H1 (cell line): ENCODE measurements at regions of chr20 and their contacts with region 1.

Region 1: DNA sequence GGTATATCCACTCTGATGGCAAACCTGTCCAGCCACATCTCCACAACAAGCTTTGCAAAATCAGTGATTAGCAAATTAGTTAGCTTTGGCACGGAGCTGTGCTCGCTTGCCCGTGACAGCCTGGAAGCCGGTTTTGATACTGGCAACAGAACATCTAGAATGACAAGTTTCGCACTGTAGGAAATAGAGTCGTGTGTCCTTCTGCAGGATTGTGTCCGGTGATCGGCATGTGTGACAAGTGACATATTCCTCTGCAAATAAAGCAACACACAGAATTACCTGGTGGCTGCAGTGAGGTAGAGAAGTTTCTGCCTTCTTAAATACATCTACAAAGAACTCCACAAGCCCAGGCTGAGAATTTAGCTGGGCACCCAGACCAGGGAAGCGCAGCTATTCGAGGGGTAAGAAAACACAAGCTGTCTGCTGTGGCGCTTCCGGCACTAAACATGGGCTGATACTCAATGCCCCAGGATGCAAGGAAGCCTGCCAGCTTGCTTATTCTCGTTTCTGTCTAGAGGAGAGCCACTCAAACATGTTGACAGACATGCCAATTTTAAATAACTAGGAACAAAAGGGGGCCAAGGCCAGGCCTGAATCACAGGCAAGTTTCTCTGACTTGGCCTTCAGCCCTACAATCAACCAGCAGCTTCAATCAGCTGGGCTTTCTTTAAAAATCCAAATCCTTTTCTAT is 22.2 kb downstream of the EIF2S2 start:
- DNase-seq: no peak
- H3K4me3 ChIP-seq: no peak overlapping the region
- H3K27ac ChIP-seq: no peak overlapping the region
- H3K4me1 ChIP-seq: no peaks in the 10 kb centered on the region
- H3K27me3 ChIP-seq: no peaks in the 10 kb centered on the region
- CTCF ChIP-seq: no peak
- EP300 ChIP-seq: no peak
- POLR2A ChIP-seq: no peak
- RAD21 ChIP-seq: no peak

Region 2: DNA sequence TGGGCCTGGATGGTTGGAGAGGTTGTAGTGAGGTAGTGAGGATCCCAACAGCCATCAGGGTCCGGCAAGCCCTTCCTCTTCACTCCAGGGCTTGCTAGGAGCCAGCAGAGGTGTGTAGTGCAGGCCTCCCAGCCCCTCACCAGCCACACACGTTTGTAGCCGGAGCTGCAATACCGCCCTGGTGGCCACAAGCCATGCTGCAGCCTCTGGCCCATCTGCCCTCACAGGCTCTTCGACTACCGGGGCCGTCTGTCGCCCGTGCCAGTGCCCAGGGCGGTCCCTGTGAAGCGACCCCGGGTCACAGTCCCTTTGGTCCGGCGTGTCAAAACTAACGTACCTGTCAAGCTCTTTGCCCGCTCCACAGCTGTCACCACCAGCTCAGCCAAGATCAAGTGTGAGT is 14.2 kb before region 1 on chr20:
- CTCF ChIA-PET with region 1: interaction called, 21 read pairs
- POLR2A ChIA-PET with region 1: interaction called, 21 read pairs
- DNase-seq: peak in 1 of 2 experiments; percentile 60
- H3K4me3 ChIP-seq: no peak overlapping the region
- H3K27ac ChIP-seq: no peak overlapping the region
- H3K4me1 ChIP-seq: no peaks in the 10 kb centered on the region
- H3K27me3 ChIP-seq: no peaks in the 10 kb centered on the region
- CTCF ChIP-seq: peak; percentile 29 to 63 (median 61); a peak in 3 of 4 replicates
- EP300 ChIP-seq: no peak
- POLR2A ChIP-seq: no peak
- RAD21 ChIP-seq: peak in 1 of 2 experiments; percentile 29; a peak in 1 of 4 replicates